Ascending aorta (tissue), 2 donors: ENCODE measurements at regions of chr11 and their contacts with region 1.

Region 1: DNA sequence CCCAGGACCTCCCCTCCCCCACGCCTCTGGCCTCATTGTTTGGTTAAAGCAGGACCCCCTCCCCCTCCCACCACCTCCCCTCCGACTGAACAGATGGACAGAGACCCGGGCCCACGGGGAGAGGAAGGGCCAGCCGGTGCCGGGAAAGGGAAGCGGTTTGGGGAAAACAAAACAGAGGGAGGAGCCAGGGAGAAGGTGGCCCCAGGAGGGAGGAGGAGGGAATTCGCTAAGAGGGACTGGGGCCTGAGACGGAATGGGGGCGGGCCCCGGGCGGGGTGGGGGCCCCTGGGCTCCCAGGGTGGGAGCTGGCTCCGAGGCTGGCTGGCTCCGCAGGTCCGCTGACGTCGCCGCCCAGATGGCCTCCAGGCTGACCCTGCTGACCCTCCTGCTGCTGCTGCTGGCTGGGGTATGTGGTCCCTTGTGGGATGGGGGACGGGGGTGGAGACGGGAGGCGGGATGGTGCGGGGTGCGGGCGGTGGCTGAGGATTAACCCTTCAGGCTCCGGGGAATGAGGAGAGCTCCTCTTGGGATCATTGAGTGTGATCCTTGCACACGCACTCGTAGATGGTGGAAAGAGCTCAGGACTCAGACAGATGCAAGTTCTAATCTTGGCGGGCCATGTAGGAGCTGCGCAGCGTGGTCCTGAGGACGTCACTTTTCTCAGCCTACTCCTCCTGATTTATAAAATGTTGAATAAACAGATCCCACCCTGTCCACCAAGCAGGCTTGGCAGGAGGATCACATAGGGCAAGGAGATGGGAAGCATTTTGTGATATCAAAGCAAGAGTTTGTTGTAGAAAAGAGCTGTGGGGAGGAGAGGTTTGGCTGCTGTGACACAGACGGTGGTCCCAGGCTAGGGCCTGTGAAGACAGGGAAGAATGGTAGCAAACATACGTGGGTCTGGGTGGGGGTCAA is 688 bp downstream of the SERPING1 start:
- DNase-seq: peak; percentile 42 to 89
- H3K4me3 ChIP-seq: peak overlapping the region; percentile 72
- H3K27ac ChIP-seq: peak overlapping the region; percentile 95 to 97
- H3K4me1 ChIP-seq: peaks cover 0 to 9% of the 10 kb centered on the region in 2 donors
- H3K27me3 ChIP-seq: no peaks in the 10 kb centered on the region
- CTCF ChIP-seq: no peak

Region 2: GRCh38 chr11:57167125-57167846 is 430.9 kb before region 1 on chr11:
- intact Hi-C with region 1: no loop called
- DNase-seq: no peak
- H3K4me3 ChIP-seq: no peak overlapping the region
- H3K27ac ChIP-seq: no peak overlapping the region
- H3K4me1 ChIP-seq: no peaks in the 10 kb centered on the region
- H3K27me3 ChIP-seq: no peaks in the 10 kb centered on the region
- CTCF ChIP-seq: no peak

Region 3: DNA sequence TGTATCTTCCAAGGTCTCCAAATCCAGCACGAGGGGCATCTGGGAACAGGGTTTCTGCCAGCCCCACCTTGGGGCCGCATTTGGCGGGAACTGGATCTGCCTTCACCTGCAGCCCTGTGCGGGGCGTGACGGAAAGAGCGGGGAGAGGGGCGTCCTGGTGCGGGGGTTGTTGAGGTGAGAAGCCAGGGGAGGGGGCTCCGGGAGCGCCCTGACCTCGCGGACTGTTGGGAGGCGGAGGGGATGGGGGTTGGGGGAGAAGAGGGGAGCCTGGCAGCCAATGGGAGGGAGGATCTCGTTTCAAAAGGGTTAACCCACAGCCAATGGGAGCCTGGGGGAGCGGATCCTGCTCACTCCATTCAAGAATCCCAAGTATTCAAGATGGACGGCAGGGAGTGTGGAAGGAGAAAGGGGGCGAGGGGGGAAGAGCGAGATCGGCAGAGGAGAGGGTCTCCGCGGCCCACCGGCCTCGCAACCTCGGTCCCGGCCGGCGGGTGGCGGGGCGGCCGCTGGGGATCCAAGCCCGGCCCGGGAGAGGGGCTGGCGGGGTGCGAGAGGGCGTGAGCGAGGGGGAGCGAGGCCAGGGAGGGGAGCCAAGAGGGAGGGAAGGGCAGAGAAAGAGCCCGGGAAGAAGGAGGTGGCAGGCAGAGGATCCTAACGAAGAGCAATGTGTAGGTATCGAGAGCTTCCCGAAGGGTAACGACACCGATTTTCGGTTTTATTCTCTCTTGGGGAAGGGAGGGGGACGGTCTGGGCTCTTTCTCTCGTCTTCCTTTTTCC is 40.0 kb after region 1 on chr11:
- intact Hi-C with region 1: loop called (anchors 2 kb)
- DNase-seq: peak in 1 of 2 donors; percentile 88
- H3K4me3 ChIP-seq: peak overlapping the region; percentile 86 to 94
- H3K27ac ChIP-seq: peak overlapping the region; percentile 62 to 82
- H3K4me1 ChIP-seq: peaks cover 3 to 27% of the 10 kb centered on the region in 2 donors
- H3K27me3 ChIP-seq: no peaks in the 10 kb centered on the region
- CTCF ChIP-seq: no peak

Region 4: GRCh38 chr11:57657194-57658022 is 59.2 kb after region 1 on chr11 and contains the start of gene CLP1:
- intact Hi-C with region 1: no loop called
- DNase-seq: peak; percentile 98 to 100
- H3K4me3 ChIP-seq: peak within 1 kb of the TSS; percentile 67 to 70
- H3K27ac ChIP-seq: peak within 1 kb of the TSS; percentile 87 to 88
- H3K4me1 ChIP-seq: peaks cover 0 to 6% of the 10 kb centered on the region in 2 donors
- H3K27me3 ChIP-seq: no peaks in the 10 kb centered on the region
- CTCF ChIP-seq: no peak
- total RNA-seq, gene CLP1: 1.2 TPM